H1 (cell line): ENCODE measurements at regions of chr10 and their contacts with region 1.

Region 1: GRCh38 chr10:102375250-102375649 is 20.3 kb upstream of the NFKB2 start:
- DNase-seq: no peak
- H3K4me3 ChIP-seq: no peak overlapping the region
- H3K27ac ChIP-seq: no peak overlapping the region
- H3K4me1 ChIP-seq: no peaks in the 10 kb centered on the region
- H3K27me3 ChIP-seq: no peaks in the 10 kb centered on the region
- CTCF ChIP-seq: peak; percentile 41 to 65 (median 60)
- EP300 ChIP-seq: no peak
- POLR2A ChIP-seq: no peak
- RAD21 ChIP-seq: peak; percentile 59 to 72

Region 2: DNA sequence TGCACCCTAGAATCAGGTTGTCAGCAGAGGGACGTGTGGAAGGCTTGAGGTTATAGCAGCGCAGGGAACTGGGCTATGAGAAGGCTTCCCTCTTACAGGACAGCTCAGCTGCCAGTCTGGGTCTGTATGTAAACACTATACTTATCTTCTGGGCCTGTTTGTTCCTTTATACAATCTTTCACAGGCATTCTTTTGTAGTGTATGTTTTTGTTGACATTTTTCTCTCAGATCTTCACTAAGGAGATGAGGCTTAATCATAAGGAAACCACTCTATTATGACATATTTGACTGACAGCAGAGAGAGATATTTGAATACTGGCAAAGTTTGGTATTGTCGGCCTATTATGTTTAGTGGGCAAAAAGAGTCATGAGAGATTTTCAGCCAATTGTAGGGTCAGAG is 129.0 kb before region 1 on chr10:
- CTCF ChIA-PET with region 1: no interaction called
- POLR2A ChIA-PET with region 1: no interaction called
- DNase-seq: no peak
- H3K4me3 ChIP-seq: peak overlapping the region; percentile 86 to 98 (median 92)
- H3K27ac ChIP-seq: no peak overlapping the region
- H3K4me1 ChIP-seq: peaks cover 2 to 8% (median 4%) of the 10 kb centered on the region in 4 experiments; a peak in 5 of 7 replicates
- H3K27me3 ChIP-seq: peaks cover 12 to 22% (median 16%) of the 10 kb centered on the region in 4 experiments
- CTCF ChIP-seq: no peak
- EP300 ChIP-seq: no peak
- POLR2A ChIP-seq: no peak
- RAD21 ChIP-seq: no peak

Region 3: DNA sequence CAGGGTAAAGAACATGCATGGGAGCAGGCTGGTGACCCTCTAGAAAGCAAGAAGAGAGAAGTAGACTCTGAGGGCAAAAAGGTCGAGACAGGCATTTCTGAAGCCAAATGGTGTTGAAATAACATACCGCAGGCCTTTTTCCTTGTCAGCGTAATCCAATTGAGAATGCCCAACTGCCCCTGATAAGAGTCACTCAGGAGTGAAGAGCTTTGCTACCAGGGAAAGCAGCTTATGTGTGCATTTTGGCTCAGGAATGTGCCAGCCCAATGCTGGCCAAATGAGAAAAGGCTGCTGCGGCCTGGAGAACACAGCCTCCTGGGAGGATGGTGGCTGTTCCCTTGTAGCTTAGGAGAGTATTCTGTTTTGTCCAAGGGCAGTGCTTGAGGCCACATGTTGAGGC is 41.1 kb before region 1 on chr10:
- CTCF ChIA-PET with region 1: no interaction called
- POLR2A ChIA-PET with region 1: no interaction called
- DNase-seq: no peak
- H3K4me3 ChIP-seq: no peak overlapping the region
- H3K27ac ChIP-seq: no peak overlapping the region
- H3K4me1 ChIP-seq: no peaks in the 10 kb centered on the region
- H3K27me3 ChIP-seq: peaks cover 0 to 2% (median 0%) of the 10 kb centered on the region in 4 experiments; a peak in 1 of 7 replicates
- CTCF ChIP-seq: no peak
- EP300 ChIP-seq: no peak
- POLR2A ChIP-seq: no peak
- RAD21 ChIP-seq: no peak

Region 4: GRCh38 chr10:102358712-102359382 is 16.4 kb before region 1 on chr10:
- CTCF ChIA-PET with region 1: interaction called, 198 read pairs
- POLR2A ChIA-PET with region 1: interaction called, 3 read pairs
- DNase-seq: no peak
- H3K4me3 ChIP-seq: no peak overlapping the region
- H3K27ac ChIP-seq: no peak overlapping the region
- H3K4me1 ChIP-seq: no peaks in the 10 kb centered on the region
- H3K27me3 ChIP-seq: no peaks in the 10 kb centered on the region
- CTCF ChIP-seq: no peak
- EP300 ChIP-seq: no peak
- POLR2A ChIP-seq: no peak
- RAD21 ChIP-seq: no peak